ENCODE measurements at regions of chrX and their contacts with region 1.

Region 1: DNA sequence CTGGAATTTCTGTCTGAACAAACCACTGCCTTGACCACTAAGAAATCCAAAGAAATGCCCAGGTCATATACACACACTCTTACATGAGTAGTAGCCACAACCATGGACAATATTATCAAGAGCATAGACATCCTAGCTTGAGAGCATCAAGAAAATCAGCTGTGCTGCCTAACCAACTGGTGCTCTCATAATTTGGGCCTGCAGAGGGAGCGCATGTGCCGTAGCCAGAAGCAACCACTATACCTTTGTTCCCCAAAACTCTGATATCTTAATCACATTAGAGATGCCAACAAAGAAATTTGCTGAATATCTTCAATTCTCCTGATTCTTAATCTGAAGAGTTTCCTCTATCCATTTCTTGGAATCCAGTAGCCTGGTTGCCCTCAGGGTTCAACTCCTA is 163.6 kb downstream of the ZNF674 start:
- DNase-seq: peak in 7 of 14 experiments; percentile 5 to 45 (median 21)
- ATAC-seq: no peak
- H3K4me3 ChIP-seq: no peak overlapping the region
- H3K4me3 Mint-ChIP-seq: no peak overlapping the region
- H3K27ac ChIP-seq: no peak overlapping the region
- H3K27ac Mint-ChIP-seq: no peak overlapping the region
- H3K4me1 ChIP-seq: no peaks in the 10 kb centered on the region
- H3K4me1 Mint-ChIP-seq: no peaks in the 10 kb centered on the region
- H3K27me3 ChIP-seq: no peaks in the 10 kb centered on the region
- H3K27me3 Mint-ChIP-seq: no peaks in the 10 kb centered on the region
- CTCF ChIP-seq: no peak

Region 2: DNA sequence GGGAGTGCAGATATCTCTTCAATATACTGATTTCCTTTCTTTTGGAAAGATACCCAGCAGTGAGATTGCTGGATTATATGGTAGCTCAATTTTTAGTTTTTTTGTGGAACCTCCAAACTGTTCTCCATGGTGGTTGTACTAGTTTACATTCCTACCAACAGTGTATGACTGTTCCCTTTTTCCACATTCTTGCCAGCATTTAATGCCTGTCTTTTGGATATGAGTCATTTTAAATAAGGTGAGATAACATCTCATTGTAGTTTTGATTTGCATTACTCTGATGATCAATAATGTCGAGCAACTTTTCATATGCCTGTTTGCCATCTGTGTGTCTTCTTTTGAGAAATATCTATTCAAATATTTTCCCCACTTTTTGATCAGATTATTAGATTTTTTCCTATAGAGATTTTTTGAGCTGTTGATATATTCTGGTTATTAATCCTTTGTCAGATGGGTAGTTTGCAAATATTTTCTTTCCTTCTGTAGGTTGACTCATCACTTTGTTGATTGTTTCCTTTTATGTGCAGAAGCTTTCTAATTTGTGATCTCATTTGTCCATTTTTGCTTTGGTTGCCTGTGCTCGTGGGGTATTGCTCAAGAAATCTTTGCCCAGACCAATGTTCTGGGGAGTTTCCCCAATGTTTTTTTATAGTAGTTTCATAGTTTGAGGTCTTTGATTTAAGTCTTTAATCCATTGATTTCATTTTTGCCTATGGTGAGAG is 389.1 kb before region 1 on chrX:
- CTCF ChIA-PET with region 1: no interaction called
- POLR2A ChIA-PET with region 1: no interaction called
- intact Hi-C with region 1: no loop called
- DNase-seq: no peak
- ATAC-seq: no peak
- H3K4me3 ChIP-seq: no peak overlapping the region
- H3K4me3 Mint-ChIP-seq: no peak overlapping the region
- H3K27ac ChIP-seq: no peak overlapping the region
- H3K27ac Mint-ChIP-seq: no peak overlapping the region
- H3K4me1 ChIP-seq: no peaks in the 10 kb centered on the region
- H3K4me1 Mint-ChIP-seq: no peaks in the 10 kb centered on the region
- H3K27me3 ChIP-seq: no peaks in the 10 kb centered on the region
- H3K27me3 Mint-ChIP-seq: no peaks in the 10 kb centered on the region
- CTCF ChIP-seq: no peak

Region 3: GRCh38 chrX:46642145-46642544 is 260.5 kb after region 1 on chrX:
- CTCF ChIA-PET with region 1: no interaction called
- POLR2A ChIA-PET with region 1: no interaction called
- intact Hi-C with region 1: loop called in 1 of 2 experiments (anchors 2 kb)
- DNase-seq: peak in 4 of 14 experiments; percentile 20 to 57 (median 52)
- ATAC-seq: peak; percentile 73
- H3K4me3 ChIP-seq: no peak overlapping the region
- H3K4me3 Mint-ChIP-seq: no peak overlapping the region
- H3K27ac ChIP-seq: no peak overlapping the region
- H3K27ac Mint-ChIP-seq: no peak overlapping the region
- H3K4me1 ChIP-seq: peaks cover 5% of the 10 kb centered on the region
- H3K4me1 Mint-ChIP-seq: peaks cover 5% of the 10 kb centered on the region
- H3K27me3 ChIP-seq: no peaks in the 10 kb centered on the region
- H3K27me3 Mint-ChIP-seq: no peaks in the 10 kb centered on the region
- CTCF ChIP-seq: peak; percentile 52

Region 4: DNA sequence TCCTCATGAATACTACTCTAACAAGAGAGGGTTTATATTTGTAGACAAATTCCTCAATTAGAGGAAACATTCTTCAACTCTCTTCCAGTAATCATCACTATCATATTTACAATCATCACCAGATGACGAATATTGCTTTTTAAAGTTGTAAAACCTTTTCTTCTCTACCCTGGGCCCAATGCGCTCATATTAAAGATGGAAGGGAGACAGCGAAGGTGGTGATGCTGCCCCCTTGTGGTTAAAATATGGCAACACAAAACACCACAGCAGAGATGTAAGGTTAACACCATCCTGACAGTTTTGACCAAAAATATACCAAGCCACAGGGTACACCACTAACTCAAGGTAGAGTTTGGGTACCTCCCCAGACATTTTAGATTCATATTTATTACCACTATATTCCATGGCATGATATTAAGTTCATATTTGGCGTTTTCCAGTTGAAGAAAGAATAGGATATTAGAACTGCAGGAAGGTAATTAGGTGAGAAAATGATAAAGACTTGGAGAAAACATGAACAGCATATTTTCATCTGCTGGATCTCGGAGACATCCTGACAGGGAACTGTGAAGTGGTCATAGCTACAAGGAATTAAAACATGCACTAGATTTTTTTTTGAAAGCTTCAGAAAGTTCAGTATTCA is 304.5 kb after region 1 on chrX:
- CTCF ChIA-PET with region 1: no interaction called
- POLR2A ChIA-PET with region 1: no interaction called
- intact Hi-C with region 1: loop called in 1 of 2 experiments (anchors 5 kb)
- DNase-seq: peak in 13 of 14 experiments; percentile 1 to 68 (median 20)
- ATAC-seq: peak; percentile 44
- H3K4me3 ChIP-seq: no peak overlapping the region
- H3K4me3 Mint-ChIP-seq: no peak overlapping the region
- H3K27ac ChIP-seq: no peak overlapping the region
- H3K27ac Mint-ChIP-seq: no peak overlapping the region
- H3K4me1 ChIP-seq: no peaks in the 10 kb centered on the region
- H3K4me1 Mint-ChIP-seq: no peaks in the 10 kb centered on the region
- H3K27me3 ChIP-seq: no peaks in the 10 kb centered on the region
- H3K27me3 Mint-ChIP-seq: no peaks in the 10 kb centered on the region
- CTCF ChIP-seq: peak; percentile 60

Region 5: DNA sequence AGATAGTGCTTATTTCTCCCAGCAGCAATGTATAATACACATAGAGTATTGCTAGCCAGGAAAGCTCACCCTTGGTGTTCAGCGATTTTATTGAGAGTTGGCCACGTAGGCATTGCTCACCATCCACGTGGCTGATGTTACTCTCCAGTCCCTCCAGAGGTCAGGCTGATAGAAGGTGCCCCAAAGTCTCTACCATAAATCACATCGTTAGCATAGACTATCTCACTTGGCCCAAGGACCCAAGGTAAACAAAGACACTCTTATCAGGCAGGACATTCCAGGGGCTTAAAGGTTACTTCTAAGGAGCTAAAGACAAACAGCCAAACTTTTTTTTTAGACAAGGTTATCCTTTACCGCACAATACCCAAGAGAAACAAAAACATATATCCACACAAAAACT is 666.4 kb after region 1 on chrX:
- CTCF ChIA-PET with region 1: no interaction called
- POLR2A ChIA-PET with region 1: no interaction called
- intact Hi-C with region 1: no loop called
- DNase-seq: no peak
- ATAC-seq: no peak
- H3K4me3 ChIP-seq: no peak overlapping the region
- H3K4me3 Mint-ChIP-seq: no peak overlapping the region
- H3K27ac ChIP-seq: no peak overlapping the region
- H3K27ac Mint-ChIP-seq: no peak overlapping the region
- H3K4me1 ChIP-seq: no peaks in the 10 kb centered on the region
- H3K4me1 Mint-ChIP-seq: no peaks in the 10 kb centered on the region
- H3K27me3 ChIP-seq: no peaks in the 10 kb centered on the region
- H3K27me3 Mint-ChIP-seq: no peaks in the 10 kb centered on the region
- CTCF ChIP-seq: no peak

Region 6: GRCh38 chrX:47361538-47362511 is 980.2 kb after region 1 on chrX:
- CTCF ChIA-PET with region 1: no interaction called
- POLR2A ChIA-PET with region 1: no interaction called
- intact Hi-C with region 1: no loop called
- DNase-seq: peak in 9 of 14 experiments; percentile 10 to 78 (median 18)
- ATAC-seq: peak; percentile 54
- H3K4me3 ChIP-seq: peak overlapping the region; percentile 22
- H3K4me3 Mint-ChIP-seq: no peak overlapping the region
- H3K27ac ChIP-seq: no peak overlapping the region
- H3K27ac Mint-ChIP-seq: peak overlapping the region; percentile 43
- H3K4me1 ChIP-seq: peaks cover 37% of the 10 kb centered on the region
- H3K4me1 Mint-ChIP-seq: peaks cover 38% of the 10 kb centered on the region
- H3K27me3 ChIP-seq: no peaks in the 10 kb centered on the region
- H3K27me3 Mint-ChIP-seq: no peaks in the 10 kb centered on the region
- CTCF ChIP-seq: no peak